ENCODE measurements at regions of chr13 and their contacts with region 1.

Region 1: GRCh38 chr13:46048572-46048971 is 4.0 kb downstream of the ZC3H13 start:
- DNase-seq: no peak
- H3K4me3 ChIP-seq: no peak overlapping the region
- H3K27ac ChIP-seq: no peak overlapping the region
- H3K4me1 ChIP-seq: no peaks in the 10 kb centered on the region
- H3K27me3 ChIP-seq: no peaks in the 10 kb centered on the region
- CTCF ChIP-seq: no peak
- EP300 ChIP-seq: no peak
- POLR2A ChIP-seq: no peak

Region 2: DNA sequence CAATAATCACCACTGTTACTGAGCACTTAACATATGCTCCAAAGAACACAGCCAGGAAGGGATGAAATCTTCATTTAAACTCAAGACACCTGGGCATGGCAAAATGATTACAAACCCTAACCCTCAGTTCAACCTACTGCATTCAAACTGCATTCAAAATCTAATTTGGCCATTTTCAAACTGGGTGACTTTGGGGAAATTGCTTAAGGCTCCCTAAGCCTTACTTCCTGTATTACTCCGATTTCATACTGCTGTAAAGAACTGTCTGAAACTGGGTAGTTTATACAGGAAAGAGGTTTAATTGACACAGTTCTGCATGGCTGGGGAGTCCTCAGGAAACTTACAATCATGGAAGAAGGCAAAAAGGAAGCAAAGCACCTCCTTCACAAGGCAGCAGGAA is 296.1 kb before region 1 on chr13:
- intact Hi-C with region 1: loop called in 1 of 4 experiments (anchors 5 kb)
- DNase-seq: no peak
- H3K4me3 ChIP-seq: no peak overlapping the region
- H3K27ac ChIP-seq: no peak overlapping the region
- H3K4me1 ChIP-seq: no peaks in the 10 kb centered on the region
- H3K27me3 ChIP-seq: no peaks in the 10 kb centered on the region
- CTCF ChIP-seq: no peak
- EP300 ChIP-seq: no peak
- POLR2A ChIP-seq: no peak

Measured in ovary (tissue), 10 donors.